ENCODE measurements at regions of chr13 and their contacts with region 1.

Region 1: GRCh38 chr13:50911937-50912795 is 2.6 kb downstream of the RNASEH2B start:
- DNase-seq: peak; percentile 98
- H3K4me3 Mint-ChIP-seq: peak overlapping the region; percentile 93
- H3K27ac Mint-ChIP-seq: peak overlapping the region; percentile 99
- H3K4me1 Mint-ChIP-seq: peaks cover 71% of the 10 kb centered on the region
- H3K27me3 Mint-ChIP-seq: no peaks in the 10 kb centered on the region

Region 2: DNA sequence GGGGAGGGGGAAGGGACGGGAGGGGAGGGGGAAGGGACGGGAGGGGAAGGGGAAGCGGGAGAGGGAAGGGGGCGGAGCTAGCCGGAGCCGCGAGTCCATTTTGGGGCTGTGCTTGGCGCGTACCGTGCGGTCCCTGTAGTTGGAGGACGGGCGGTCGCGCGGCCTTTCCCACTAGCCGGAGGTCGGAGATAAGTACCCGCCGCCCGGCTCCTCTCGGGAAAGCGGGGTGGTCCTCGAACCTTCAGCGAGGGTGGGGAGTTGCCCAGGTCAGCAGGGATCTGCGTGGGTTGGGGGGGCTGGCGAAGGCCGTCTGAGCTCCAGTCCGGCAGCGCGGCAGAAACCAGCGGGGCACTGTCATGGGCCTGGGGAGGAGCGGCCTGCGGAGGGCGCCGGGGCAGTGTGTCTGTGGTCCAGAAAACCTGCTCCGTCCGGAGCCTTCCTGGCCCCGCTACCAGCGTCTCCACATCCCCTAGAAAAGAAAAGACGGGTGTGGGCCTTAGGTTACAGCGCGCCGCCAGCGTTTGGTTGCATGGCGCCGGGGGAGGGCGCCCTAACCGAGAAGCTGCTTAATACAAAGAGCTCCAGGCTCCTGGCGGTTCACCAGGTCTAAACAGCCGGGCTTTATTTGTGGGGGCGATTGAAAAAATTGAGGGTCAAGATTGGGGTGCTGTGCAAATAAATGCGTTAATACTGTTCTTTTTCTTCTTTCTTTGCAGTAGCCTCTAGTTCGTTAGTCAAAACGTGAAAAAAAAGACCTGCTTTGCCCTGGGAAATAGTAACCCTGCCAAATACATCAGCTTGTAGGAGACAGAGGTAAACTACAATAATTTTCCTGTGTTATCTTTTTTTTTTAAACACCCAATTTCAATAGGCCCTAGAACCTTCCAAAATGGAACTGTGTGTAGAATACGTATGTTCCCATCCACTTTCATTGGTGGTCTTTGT is 914.9 kb before region 1 on chr13 and contains the start of gene TRIM13:
- CTCF ChIA-PET with region 1: interaction called, 15 read pairs
- POLR2A ChIA-PET with region 1: interaction called, 3 read pairs
- DNase-seq: peak; percentile 86
- H3K4me3 Mint-ChIP-seq: peak within 1 kb of the TSS; percentile 79
- H3K27ac Mint-ChIP-seq: peak within 1 kb of the TSS; percentile 93
- H3K4me1 Mint-ChIP-seq: peaks cover 39% of the 10 kb centered on the region
- H3K27me3 Mint-ChIP-seq: no peaks in the 10 kb centered on the region
- total RNA-seq, gene TRIM13: 17.7 to 18.5 TPM

Region 3: GRCh38 chr13:50081679-50082425 is 830.3 kb before region 1 on chr13:
- CTCF ChIA-PET with region 1: interaction called, 13 read pairs
- POLR2A ChIA-PET with region 1: interaction called, 3 read pairs
- DNase-seq: peak; percentile 99
- H3K4me3 Mint-ChIP-seq: peak overlapping the region; percentile 99
- H3K27ac Mint-ChIP-seq: peak overlapping the region; percentile 100
- H3K4me1 Mint-ChIP-seq: peaks cover 45% of the 10 kb centered on the region
- H3K27me3 Mint-ChIP-seq: no peaks in the 10 kb centered on the region

Region 4: DNA sequence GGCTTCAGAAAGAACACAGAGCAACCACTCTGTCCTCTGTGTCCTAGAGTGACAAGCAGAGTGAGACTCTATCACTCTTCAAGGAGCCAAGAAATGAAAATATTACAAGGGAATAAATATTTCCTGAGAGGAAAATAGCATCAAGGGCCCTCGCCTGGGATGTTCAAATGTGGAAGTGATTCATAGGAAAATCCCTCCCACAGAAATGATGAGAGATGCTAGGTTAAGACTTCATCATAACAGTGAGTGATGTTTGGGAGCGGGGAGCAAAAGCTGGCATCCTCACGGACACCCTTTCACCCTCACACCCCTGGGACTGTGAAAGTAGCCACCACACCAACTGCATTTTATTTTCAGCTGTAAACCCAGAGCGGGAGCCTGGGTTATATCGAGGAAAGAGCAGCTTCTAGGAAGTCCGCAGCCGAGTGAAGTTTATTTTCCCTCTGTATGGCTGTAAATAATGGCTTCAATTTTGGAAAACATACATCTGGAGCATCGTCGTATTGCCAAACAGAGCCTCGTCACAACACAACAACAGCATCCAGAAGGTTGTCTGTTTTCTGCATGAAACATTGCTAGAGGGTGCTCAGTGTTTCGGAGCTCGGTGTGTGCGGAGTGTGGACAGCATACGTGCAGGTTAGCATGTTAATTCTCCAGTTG is 123.5 kb before region 1 on chr13:
- CTCF ChIA-PET with region 1: no interaction called
- POLR2A ChIA-PET with region 1: no interaction called
- DNase-seq: no peak
- H3K4me3 Mint-ChIP-seq: no peak overlapping the region
- H3K27ac Mint-ChIP-seq: no peak overlapping the region
- H3K4me1 Mint-ChIP-seq: no peaks in the 10 kb centered on the region
- H3K27me3 Mint-ChIP-seq: peaks cover 7% of the 10 kb centered on the region

Region 5: DNA sequence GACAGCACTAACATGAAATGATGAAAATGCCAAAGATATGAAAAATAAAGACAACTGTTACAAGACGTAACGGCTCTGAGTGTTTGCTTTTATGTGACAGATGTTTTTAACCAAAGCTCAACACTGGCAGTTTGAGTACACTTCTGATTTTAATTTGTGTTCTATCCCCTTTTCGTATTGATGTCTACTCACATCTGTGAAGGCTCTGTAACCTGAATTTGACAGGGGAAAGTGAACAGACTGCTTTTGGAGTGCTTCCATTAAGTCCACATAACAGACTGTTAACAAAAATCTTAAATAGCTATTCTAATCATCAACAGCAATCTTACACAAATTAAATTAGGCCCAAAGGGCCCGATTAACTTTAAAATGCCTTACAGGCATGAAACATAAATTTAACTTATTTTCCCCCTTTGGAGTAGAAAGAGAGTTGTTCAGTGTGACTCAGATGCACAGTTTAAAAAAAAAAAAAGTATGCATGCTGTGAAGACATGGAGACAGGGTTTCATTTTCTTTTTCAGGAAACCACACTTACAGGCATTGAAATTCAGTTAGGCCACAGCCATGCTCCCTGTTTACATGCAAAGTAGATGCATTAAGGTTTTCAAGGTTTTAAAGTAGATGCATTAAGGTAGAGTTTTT is 18.8 kb before region 1 on chr13:
- CTCF ChIA-PET with region 1: interaction called, 19 read pairs
- POLR2A ChIA-PET with region 1: interaction called, 3 read pairs
- DNase-seq: peak; percentile 63
- H3K4me3 Mint-ChIP-seq: peak overlapping the region; percentile 63
- H3K27ac Mint-ChIP-seq: peak overlapping the region; percentile 98
- H3K4me1 Mint-ChIP-seq: peaks cover 55% of the 10 kb centered on the region
- H3K27me3 Mint-ChIP-seq: no peaks in the 10 kb centered on the region

Region 6: GRCh38 chr13:51825165-51825592 is 913.0 kb after region 1 on chr13:
- CTCF ChIA-PET with region 1: no interaction called
- POLR2A ChIA-PET with region 1: no interaction called
- DNase-seq: peak; percentile 54
- H3K4me3 Mint-ChIP-seq: peak overlapping the region; percentile 65
- H3K27ac Mint-ChIP-seq: peak overlapping the region; percentile 97
- H3K4me1 Mint-ChIP-seq: peaks cover 97% of the 10 kb centered on the region
- H3K27me3 Mint-ChIP-seq: no peaks in the 10 kb centered on the region